ENCODE measurements at regions of chr4 and their contacts with region 1.

Region 1: GRCh38 chr4:112938461-112939058 is 110.9 kb upstream of the ANK2 start:
- DNase-seq: no peak
- H3K4me3 ChIP-seq: no peak overlapping the region
- H3K27ac ChIP-seq: peak overlapping the region in 45 of 59 donors; percentile 6 to 76 (median 52)
- H3K27me3 ChIP-seq: no peaks in the 10 kb centered on the region
- CTCF ChIP-seq: peak; percentile 58 to 98 (median 85)

Region 2: DNA sequence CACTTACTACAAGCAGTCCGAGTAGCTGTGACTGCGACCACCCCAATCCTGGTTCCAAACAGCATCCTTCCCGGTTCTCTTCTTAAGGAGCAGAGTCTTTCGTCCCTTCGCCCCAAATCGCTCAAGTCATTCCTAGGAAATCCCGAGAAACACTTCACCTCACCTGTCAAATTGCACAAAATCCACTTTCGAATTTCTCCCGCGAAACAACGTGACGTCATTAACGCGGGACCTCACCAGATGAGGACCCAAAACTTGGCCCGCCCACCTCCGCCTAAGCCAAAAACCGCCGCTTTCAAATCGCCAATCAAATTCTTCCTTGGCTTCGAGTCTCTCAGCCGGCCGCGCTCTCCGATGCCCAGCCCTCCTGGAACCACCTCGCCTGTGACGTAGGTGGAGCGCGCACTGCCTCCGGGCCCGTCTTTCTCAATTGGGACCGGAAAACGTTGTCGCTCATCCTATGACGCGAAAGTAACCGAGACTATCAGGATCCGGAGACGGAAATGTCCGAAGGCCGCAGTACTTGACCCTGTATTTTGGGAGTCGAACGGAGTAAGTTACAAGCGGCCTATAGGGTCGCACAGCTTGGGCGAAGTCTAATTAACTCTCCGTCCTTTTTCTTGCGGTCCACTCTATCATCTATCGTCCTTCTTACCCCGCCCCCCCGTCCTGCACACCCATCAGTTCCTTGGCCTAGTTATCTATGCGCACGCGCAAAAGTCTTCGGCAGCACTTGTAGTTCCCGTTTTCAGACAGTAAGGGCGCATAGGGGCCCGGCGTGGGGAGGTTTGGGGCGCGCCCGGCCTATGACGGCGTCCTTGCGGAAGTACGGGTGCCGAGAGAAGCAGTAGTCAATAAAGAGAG is 301.6 kb before region 1 on chr4 and contains the starts of genes LARP7 and ZGRF1:
- intact Hi-C with region 1: loop called (anchors 5 to 10 kb)
- DNase-seq: peak; percentile 93 to 99 (median 98)
- H3K4me3 ChIP-seq: peak within 1 kb of the TSS; percentile 49 to 96 (median 78)
- H3K27ac ChIP-seq: peak within 1 kb of the TSS; percentile 86 to 100 (median 98)
- H3K27me3 ChIP-seq: no peaks in the 10 kb centered on the region
- CTCF ChIP-seq: peak; percentile 37 to 99 (median 82)
- total RNA-seq, gene LARP7: 20.0 to 45.1 (median 31.6) TPM
- total RNA-seq, gene ZGRF1: 6.6 to 28.0 (median 14.5) TPM

Region 3: GRCh38 chr4:112817933-112818593 is 120.5 kb before region 1 on chr4:
- intact Hi-C with region 1: loop called in 1 of 2 experiments (anchors 5 kb)
- DNase-seq: peak; percentile 54 to 97 (median 93)
- H3K4me3 ChIP-seq: peak overlapping the region; percentile 48 to 90 (median 75)
- H3K27ac ChIP-seq: peak overlapping the region; percentile 54 to 96 (median 89)
- H3K27me3 ChIP-seq: no peaks in the 10 kb centered on the region
- CTCF ChIP-seq: peak in 41 of 56 donors; percentile 7 to 67 (median 35)

Region 4: GRCh38 chr4:113094802-113095201 is 156.2 kb after region 1 on chr4:
- intact Hi-C with region 1: loop called in 1 of 2 experiments (anchors 5 kb)
- DNase-seq: no peak
- H3K4me3 ChIP-seq: peak overlapping the region in 6 of 59 donors; percentile 7 to 21 (median 11)
- H3K27ac ChIP-seq: peak overlapping the region in 38 of 59 donors; percentile 1 to 74 (median 40)
- H3K27me3 ChIP-seq: no peaks in the 10 kb centered on the region
- CTCF ChIP-seq: peak; percentile 57 to 95 (median 82)

Measured in dorsolateral prefrontal cortex (tissue), 120 donors.